Heart right ventricle (tissue), 16 donors: ENCODE measurements at regions of chr10 and their contacts with region 1.

Region 1: DNA sequence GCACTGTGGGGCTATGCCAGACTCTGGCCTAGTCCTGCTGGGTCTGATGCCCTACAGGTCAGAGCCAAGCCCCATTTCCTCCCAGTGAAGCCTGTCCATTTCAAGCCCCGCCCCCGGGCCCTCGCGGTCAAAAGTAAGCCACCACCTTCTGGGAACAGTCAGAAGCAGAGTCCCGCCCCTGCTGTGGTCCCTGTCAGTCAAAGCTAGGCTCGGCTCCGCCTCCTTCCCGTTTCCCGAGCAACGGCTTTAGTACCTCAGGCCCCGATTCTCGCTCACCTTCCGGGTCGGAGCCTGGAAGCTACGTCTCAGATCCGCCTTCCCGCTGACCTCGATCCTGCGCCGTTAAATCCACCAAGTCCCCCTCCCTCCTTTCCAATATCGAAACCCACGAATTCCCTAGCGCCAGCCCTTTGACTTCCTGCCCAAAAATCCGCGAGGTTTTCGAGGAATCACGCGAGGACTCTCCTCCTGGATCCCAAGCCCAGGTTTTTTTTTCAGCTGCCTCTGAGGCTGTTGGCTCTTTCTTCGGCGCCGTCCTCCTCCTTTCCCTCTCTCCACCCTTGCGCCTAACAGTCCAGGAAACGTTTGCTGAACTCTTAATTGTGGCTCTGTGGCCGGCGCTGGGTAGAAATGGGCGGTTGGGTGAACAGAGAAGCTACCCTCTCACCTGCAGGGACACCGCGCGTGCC is 11.8 kb downstream of the SFXN3 start:
- DNase-seq: peak; percentile 95 to 97
- ATAC-seq: peak; percentile 92 to 97 (median 95)
- H3K4me3 ChIP-seq: peak overlapping the region; percentile 21 to 59 (median 53)
- H3K27ac ChIP-seq: peak overlapping the region; percentile 47 to 91 (median 84)
- H3K4me1 ChIP-seq: peaks cover 3 to 28% (median 16%) of the 10 kb centered on the region in 9 donors
- H3K27me3 ChIP-seq: peaks cover 0 to 28% (median 16%) of the 10 kb centered on the region in 7 donors
- CTCF ChIP-seq: no peak

Region 2: GRCh38 chr10:100962351-100963080 is 80.3 kb before region 1 on chr10:
- intact Hi-C with region 1: no loop called
- DNase-seq: no peak
- ATAC-seq: no peak
- H3K4me3 ChIP-seq: no peak overlapping the region
- H3K27ac ChIP-seq: no peak overlapping the region
- H3K4me1 ChIP-seq: no peaks in the 10 kb centered on the region
- H3K27me3 ChIP-seq: no peaks in the 10 kb centered on the region
- CTCF ChIP-seq: no peak

Region 3: DNA sequence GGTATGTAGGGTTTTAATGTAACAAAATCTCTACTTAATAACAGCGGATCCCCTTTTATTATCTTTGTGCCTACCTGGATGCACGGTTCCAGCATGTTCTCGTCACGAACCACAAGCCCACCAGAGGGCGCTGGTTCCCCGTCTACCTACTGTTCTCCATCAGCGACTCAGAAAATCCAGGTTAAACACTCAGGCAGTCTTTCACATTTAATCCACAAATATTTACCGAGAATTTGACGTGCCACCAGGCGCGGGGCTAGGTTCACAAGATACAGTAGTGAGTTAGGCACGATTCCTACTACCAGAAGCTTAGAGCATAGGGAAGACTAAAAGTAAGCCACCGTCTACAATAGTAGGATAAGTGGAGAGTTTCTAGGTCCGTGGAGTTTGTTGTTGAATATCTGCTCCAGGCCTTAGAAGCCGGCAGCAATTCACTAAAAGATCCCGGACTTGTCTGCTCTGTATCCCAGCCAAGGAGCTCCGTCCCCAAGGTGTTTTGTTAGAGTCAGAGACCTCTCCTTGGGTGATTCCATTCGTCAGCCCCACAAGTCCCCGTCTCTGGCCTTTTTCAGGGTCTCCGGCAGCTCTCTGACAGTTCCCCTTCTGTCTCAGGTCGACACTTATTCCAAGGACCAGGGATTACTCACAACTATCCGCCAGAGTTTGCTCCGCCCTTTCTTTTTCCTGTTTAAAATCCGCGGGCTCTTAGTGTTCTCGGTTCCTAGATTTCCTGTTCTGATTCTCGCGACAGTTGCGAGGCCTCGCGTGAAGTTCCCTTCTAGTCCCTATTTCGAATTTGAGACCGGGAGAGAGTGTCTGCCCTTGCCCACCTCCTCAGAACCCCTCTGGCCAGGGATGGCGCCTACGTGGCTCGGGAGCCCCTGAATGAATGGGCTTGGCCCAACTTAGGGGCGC is 17.5 kb after region 1 on chr10:
- intact Hi-C with region 1: loop called in 3 of 10 experiments (anchors 2 kb)
- DNase-seq: peak; percentile 93 to 96
- ATAC-seq: peak; percentile 61 to 85 (median 76)
- H3K4me3 ChIP-seq: peak overlapping the region; percentile 52 to 90 (median 76)
- H3K27ac ChIP-seq: peak overlapping the region; percentile 92 to 99 (median 98)
- H3K4me1 ChIP-seq: peaks cover 6 to 52% (median 43%) of the 10 kb centered on the region in 9 donors
- H3K27me3 ChIP-seq: peaks cover 0 to 38% (median 0%) of the 10 kb centered on the region in 7 donors
- CTCF ChIP-seq: peak; percentile 67 to 95 (median 89)

Region 4: DNA sequence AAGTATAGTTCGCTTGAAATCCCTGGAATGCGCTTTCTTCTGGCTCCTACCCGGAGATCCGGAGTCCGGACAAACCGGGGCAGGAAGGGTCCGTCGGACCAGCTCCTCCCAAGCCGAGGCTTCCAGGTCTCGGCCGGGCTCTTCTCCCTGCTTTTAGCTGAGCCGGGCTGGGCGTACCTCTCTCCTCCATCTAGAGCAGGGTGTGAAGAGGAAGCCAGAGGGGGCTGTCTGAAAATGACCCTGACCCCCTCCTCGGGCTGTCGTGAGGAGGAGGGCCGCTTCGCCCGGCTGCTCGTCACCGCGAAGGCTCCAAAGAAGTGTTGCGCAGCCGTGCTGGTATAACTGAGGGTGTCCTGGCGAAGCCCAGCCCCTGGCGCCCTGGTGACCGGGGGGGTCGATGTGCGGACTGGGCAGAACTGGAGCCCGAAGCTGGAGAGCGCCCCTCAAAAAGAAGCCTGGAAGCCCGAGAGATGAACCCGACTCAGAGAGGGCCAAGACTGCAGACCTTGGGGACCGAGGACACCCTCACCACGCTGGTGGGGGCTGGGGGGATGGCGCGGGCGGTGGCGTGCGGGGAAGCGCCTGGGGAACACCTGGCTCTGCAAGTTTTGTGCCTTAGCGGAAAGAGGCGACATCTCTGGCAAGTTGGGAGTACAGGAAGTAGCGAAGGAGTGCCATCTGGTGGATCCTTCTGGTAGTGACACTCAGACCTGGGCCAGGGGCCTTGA is 24.7 kb after region 1 on chr10:
- intact Hi-C with region 1: loop called in 1 of 10 experiments (anchors 1 kb)
- DNase-seq: peak; percentile 55 to 79
- ATAC-seq: peak in 7 of 8 donors; percentile 14 to 69 (median 49)
- H3K4me3 ChIP-seq: peak overlapping the region; percentile 43 to 68 (median 61)
- H3K27ac ChIP-seq: peak overlapping the region; percentile 34 to 99 (median 90)
- H3K4me1 ChIP-seq: peaks cover 10 to 64% (median 59%) of the 10 kb centered on the region in 9 donors
- H3K27me3 ChIP-seq: peaks cover 0 to 52% (median 10%) of the 10 kb centered on the region in 7 donors
- CTCF ChIP-seq: peak; percentile 79 to 93 (median 91)

Region 5: DNA sequence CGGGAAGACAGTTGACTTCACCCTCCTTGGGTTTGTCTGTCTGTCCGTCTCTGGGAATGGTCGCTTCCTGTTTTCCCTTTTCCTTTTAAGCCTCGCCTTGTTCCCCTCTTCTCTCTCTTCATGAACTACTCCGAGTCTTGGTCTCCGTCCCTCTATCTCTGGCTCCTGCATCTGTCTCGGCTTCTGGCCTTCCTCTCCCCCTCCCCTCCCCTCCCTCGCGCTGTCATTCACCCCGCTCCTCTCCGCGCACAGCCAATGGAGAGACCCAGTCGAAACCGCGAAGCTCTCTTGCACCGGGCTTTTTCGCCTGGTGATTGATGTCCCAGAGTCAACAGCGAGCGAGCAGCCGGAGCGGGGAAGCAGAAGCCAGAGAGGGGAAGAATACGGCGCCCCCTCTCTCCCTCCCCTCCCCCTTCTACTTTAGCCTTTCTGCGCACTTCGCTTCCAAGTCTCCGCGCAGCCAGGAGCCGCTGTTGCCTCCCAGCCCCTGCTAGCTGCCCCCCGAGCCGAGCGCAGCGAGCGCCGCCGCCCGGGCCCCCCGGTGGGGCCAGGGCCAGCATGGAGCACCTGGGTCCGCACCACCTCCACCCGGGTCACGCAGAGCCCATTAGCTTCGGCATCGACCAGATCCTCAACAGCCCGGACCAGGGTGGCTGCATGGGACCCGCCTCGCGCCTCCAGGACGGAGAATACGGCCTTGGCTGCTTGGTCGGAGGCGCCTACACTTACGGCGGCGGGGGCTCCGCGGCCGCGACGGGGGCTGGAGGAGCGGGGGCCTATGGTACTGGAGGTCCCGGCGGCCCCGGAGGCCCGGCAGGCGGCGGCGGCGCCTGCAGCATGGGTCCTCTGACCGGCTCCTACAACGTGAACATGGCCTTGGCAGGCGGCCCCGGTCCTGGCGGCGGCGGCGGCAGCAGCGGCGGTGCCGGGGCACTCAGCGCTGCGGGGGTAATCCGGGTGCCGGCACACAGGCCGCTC is 88.5 kb after region 1 on chr10 and contains the start of gene TLX1:
- intact Hi-C with region 1: loop called in 1 of 10 experiments (anchors 10 kb)
- DNase-seq: peak in 1 of 2 donors; percentile 38
- ATAC-seq: peak in 2 of 8 donors; percentile 41 to 58
- H3K4me3 ChIP-seq: peak within 1 kb of the TSS in 9 of 10 donors; percentile 21 to 48 (median 36)
- H3K27ac ChIP-seq: no peak within 1 kb of the TSS
- H3K4me1 ChIP-seq: peaks cover 7 to 47% (median 36%) of the 10 kb centered on the region in 9 donors
- H3K27me3 ChIP-seq: peaks cover 46 to 100% (median 100%) of the 10 kb centered on the region in 7 donors
- CTCF ChIP-seq: no peak
- total RNA-seq, gene TLX1: 0.27 to 0.74 TPM in 2 of 10 donors, not detected in the others